ENCODE measurements at regions of chr13 and their contacts with region 1.

Region 1: DNA sequence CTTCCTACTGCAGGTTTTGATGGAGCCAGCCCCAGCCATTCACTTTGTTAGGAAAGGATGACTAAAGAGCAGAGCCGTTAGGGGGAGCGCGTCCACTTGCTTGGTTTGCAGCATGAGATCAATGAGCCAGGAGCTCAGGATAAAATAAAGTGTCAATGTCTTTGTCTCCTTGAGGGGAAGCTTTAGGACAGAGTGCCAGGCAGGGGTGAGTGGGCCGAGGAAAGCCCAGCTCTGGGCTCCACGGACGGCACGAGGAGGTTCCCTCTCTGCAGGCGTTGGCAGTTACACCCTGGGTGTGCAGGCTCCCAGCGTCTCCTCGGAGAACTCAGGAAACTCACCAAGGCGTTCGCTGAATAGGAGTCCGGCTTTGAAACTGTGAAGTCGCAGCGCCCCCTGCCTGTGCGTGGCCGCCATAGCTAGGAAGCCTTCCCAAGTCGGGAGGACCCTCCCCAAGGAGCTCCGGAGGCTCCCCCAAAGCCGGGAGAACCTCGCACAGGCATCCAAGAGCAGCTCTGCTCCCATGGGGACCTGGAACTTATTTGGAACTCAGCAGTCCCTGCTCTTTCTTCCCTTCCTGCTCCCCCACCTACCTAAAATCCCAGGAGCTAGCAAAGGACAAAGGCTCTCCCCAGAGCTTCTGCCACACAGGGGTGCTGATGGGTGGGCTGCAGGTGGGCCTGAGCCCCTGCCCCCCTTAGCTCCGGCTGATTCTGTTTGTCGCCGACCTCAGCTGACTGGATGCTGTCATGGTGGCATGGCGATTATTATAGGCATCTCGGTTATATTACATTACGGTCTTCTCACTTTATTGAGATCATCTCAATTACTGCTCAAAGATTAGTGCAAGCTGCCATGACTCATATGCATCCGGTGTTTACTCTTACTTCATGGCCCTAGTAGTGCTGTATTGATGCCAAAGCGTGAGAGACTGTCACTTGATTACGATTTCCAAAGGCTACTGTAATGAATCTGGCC is 34.4 kb downstream of the GSX1 start:
- DNase-seq: peak; percentile 77
- H3K4me3 Mint-ChIP-seq: no peak overlapping the region
- H3K27ac Mint-ChIP-seq: no peak overlapping the region
- H3K4me1 Mint-ChIP-seq: no peaks in the 10 kb centered on the region
- H3K27me3 Mint-ChIP-seq: peaks cover 58% of the 10 kb centered on the region

Region 2: GRCh38 chr13:26985285-26985878 is 841.3 kb before region 1 on chr13:
- CTCF ChIA-PET with region 1: interaction called, 3 read pairs
- intact Hi-C with region 1: loop called (anchors 10 kb)
- DNase-seq: peak; percentile 86
- H3K4me3 Mint-ChIP-seq: no peak overlapping the region
- H3K27ac Mint-ChIP-seq: no peak overlapping the region
- H3K4me1 Mint-ChIP-seq: no peaks in the 10 kb centered on the region
- H3K27me3 Mint-ChIP-seq: peaks cover 5% of the 10 kb centered on the region

Region 3: DNA sequence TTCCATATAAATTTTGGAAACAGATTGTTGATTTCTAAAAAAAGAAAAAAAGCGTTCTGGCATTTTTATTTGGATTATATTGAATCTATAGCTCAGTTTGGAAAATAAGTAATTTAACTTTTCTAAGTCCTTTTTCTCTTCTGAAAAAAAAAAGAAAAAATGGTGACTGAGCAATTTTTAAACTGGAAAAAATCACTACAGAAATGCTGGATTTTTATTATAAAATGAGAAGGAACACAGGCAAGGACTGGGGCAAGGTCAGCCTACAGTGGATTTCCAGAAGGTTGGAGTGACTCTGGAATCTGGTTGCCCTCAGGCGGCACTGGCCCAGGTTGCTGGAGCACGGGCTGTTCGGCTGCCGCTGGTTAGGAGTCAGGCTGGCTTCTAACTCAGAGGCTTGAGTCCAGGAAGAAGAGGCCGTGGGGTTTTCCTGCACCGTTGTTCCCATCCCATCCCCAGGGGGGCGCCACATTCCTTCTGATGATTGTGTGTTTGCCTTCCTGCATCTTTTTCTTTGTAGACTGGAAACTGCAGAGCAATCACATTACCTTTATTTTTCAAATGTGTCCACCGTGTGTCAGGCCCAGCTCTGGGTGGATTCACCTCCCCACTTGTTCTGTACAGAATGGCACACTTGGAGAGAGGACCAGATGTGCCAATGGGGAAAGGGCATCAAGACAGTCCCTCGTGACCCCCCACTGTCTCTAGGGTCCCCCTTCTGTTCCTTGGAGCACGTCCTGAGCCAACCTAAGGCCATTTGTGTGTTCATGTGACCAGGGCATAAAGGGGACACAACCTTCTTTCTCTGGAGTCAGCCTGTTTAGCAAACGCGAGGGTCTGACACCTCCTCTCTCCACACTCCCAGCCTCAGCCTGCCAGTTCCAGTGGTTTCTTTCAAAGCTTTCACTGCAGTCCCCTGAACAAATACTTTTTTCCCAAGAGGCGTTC is 446.7 kb before region 1 on chr13:
- CTCF ChIA-PET with region 1: interaction called, 143 read pairs
- intact Hi-C with region 1: loop called (anchors 1 kb)
- DNase-seq: peak; percentile 82
- H3K4me3 Mint-ChIP-seq: no peak overlapping the region
- H3K27ac Mint-ChIP-seq: no peak overlapping the region
- H3K4me1 Mint-ChIP-seq: no peaks in the 10 kb centered on the region
- H3K27me3 Mint-ChIP-seq: peaks cover 3% of the 10 kb centered on the region

Region 4: GRCh38 chr13:27533155-27533643 is 293.5 kb before region 1 on chr13:
- CTCF ChIA-PET with region 1: interaction called, 60 read pairs
- intact Hi-C with region 1: loop called (anchors 1 kb)
- DNase-seq: peak; percentile 61
- H3K4me3 Mint-ChIP-seq: no peak overlapping the region
- H3K27ac Mint-ChIP-seq: no peak overlapping the region
- H3K4me1 Mint-ChIP-seq: peaks cover 8% of the 10 kb centered on the region
- H3K27me3 Mint-ChIP-seq: peaks cover 2% of the 10 kb centered on the region

Region 5: GRCh38 chr13:27775943-27776342 is 50.7 kb before region 1 on chr13:
- CTCF ChIA-PET with region 1: interaction called, 54 read pairs
- intact Hi-C with region 1: loop called (anchors 1 kb)
- DNase-seq: no peak
- H3K4me3 Mint-ChIP-seq: no peak overlapping the region
- H3K27ac Mint-ChIP-seq: no peak overlapping the region
- H3K4me1 Mint-ChIP-seq: no peaks in the 10 kb centered on the region
- H3K27me3 Mint-ChIP-seq: peaks cover 37% of the 10 kb centered on the region

Region 6: GRCh38 chr13:27839809-27840467 is 13.3 kb after region 1 on chr13:
- CTCF ChIA-PET with region 1: interaction called, 12 read pairs
- intact Hi-C with region 1: no loop called
- DNase-seq: no peak
- H3K4me3 Mint-ChIP-seq: no peak overlapping the region
- H3K27ac Mint-ChIP-seq: no peak overlapping the region
- H3K4me1 Mint-ChIP-seq: no peaks in the 10 kb centered on the region
- H3K27me3 Mint-ChIP-seq: peaks cover 22% of the 10 kb centered on the region

Region 7: DNA sequence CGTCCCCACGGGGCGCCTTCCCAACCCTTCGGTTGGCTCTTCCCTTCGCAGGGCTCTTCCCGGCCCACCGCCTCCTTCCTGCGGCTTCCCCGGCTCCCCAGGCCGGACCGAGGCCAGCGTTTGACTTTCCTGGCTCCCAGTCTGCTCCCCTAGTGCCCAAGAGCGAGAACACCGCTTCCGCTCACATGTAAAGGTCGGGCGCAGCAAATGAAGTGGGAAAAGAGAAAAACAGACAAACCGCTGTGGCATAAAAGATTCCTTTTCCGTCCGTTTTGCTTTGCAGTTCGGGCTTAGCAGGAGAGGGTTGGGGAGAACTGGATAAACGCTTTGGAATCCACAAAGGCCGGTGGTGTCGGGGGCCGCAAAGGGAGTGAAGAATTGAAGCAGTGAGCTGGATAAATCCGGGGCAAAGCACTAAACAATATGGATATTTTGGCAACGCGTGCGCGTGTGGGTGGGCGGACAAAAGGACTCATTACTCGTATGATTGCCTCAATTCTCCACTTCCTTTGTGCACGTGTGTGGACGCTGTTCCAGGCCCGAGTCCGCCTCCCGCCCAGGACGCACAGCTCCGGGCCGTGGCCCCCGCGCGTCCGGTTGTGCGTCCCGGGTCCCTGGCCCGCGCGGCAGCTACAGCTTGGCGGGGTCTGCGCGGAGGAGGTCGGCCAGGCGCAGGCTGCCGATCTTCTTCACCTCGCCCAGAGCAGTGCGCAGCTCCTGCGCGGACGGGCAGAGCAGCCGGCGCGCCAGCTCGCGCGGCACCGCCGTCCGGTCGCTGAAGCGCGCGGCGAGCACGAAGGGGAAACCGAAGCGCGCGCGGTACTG is 151.0 kb after region 1 on chr13:
- CTCF ChIA-PET with region 1: interaction called, 189 read pairs
- intact Hi-C with region 1: no loop called
- DNase-seq: no peak
- H3K4me3 Mint-ChIP-seq: peak overlapping the region; percentile 30
- H3K27ac Mint-ChIP-seq: no peak overlapping the region
- H3K4me1 Mint-ChIP-seq: peaks cover 27% of the 10 kb centered on the region
- H3K27me3 Mint-ChIP-seq: peaks cover 76% of the 10 kb centered on the region

Measured in activated naive CD4-positive, alpha-beta T cell treated with anti-CD3 and anti-CD28 coated beads for 36 hours (primary cell).